ENCODE measurements at regions of chr7 and their contacts with region 1.

Region 1: GRCh38 chr7:42167631-42168236 is 69.3 kb downstream of the GLI3 start:
- DNase-seq: no peak
- H3K4me3 ChIP-seq: no peak overlapping the region
- H3K27me3 ChIP-seq: no peaks in the 10 kb centered on the region
- CTCF ChIP-seq: no peak

Region 2: DNA sequence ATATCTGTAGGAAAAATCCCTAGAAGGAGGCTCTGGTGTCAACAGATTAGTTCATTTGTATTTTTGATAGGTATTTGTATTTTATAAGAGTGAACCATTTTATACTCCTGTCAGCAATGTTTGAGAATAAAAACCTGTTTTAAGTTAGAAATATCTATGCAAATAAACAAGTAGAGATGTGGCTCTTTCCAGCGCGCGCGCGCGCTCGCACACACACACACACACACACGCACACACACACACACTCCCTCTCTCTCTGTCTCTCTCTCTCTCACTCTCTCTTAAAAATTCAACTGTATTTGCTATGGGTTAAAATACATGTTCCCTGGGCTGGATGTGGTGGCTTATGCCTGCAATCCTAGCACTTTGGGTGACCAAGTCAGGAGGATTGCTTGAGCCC is 1919.1 kb before region 1 on chr7:
- CTCF ChIA-PET with region 1: no interaction called
- POLR2A ChIA-PET with region 1: interaction called, 23 read pairs
- DNase-seq: no peak
- H3K4me3 ChIP-seq: no peak overlapping the region
- H3K27me3 ChIP-seq: no peaks in the 10 kb centered on the region
- CTCF ChIP-seq: no peak

Measured in BJ (cell line).